Left ventricle myocardium superior (tissue), 1 donor: ENCODE measurements at regions of chr15 and their contacts with region 1.

Region 1: DNA sequence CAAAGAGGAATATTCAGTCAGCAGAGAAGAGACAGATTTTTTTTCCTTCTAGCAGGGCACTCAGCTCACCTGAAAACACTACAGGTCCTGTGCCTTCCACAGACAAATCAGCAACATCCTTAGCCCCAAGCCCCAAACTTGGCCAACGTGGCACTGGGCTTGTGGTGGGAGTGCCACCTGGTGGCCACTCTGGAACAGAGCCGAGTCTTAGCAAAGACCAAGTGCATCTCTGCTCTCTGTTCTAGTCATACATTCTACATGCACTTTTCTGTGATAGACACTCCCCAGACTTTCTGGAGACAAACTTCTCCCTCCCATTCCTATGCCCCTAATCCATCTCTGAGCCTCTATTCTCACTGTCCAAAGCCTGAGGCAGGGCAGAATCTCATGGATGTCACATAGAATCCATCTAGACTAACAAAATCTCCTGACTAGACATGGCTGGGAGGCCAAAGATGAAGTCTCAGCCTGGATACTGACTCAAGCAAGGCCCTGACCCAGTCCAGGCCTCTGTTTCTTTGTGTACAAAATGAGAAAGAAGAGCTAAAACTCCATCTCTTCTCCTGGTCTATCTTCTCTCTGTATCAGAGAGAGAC is 5.1 kb upstream of the SEMA7A start:
- DNase-seq: peak; percentile 82
- ATAC-seq: peak; percentile 57

Region 2: GRCh38 chr15:73964736-73965093 is 474.1 kb before region 1 on chr15:
- intact Hi-C with region 1: no loop called
- DNase-seq: peak; percentile 91
- ATAC-seq: peak; percentile 96

Region 3: DNA sequence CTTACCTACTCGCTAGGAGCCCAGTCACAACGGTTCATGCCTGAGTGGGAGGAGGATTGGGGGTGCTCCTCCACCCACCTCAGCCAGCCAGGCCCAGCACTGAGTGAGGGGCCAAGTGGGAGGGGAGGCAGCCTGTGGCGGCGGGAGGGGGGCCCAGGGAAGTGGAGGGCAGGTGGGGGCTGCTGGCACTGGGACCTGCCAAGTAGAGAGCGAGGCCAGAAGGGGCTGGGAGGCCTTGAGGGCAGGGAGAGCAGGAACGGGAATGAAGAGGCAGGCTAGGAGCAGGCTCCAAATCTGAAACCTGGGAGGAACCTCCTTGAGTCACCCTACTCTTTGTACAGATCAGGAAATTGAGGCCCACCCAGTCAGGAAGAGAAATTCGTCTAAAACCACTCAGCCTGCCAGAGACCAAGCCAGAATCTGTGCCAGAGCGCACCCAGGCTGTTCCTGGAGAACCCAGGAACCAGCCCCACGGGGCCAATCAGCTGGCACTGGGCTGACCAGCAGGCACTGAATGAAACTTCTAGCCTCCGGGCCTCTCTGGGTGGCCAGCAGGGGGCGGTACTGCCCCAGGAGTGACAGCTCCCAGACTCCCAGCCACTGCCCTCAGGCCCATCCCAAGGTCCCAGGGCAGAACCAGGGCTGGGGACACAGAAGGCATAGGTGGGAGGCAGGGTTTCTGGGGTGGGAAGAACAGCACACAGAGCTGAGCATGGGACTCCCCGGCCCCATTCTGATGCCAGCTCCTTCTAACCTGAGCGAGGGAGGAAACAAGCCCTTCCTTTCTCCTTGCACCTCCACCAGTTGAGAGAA is 56.6 kb before region 1 on chr15:
- intact Hi-C with region 1: loop called (anchors 5 kb)
- DNase-seq: peak; percentile 91
- ATAC-seq: peak; percentile 91

Region 4: GRCh38 chr15:74531144-74531811 is 92.5 kb after region 1 on chr15:
- intact Hi-C with region 1: no loop called
- DNase-seq: no peak
- ATAC-seq: no peak